Motor neuron (in vitro differentiated cells): ENCODE measurements at regions of chr1 and their contacts with region 1.

Region 1: GRCh38 chr1:27662707-27663393 is 9.1 kb downstream of the IFI6 start:
- ATAC-seq: peak; percentile 14 to 78 (median 64)
- H3K4me3 ChIP-seq: no peak overlapping the region
- H3K27ac ChIP-seq: peak overlapping the region in 1 of 2 donors; percentile 56
- H3K4me1 ChIP-seq: peaks cover 0 to 13% of the 10 kb centered on the region in 2 donors

Region 2: GRCh38 chr1:27300341-27301051 is 362.4 kb before region 1 on chr1:
- in situ Hi-C with region 1: loop called in 2 of 9 experiments (anchors 10 to 25 kb)
- ATAC-seq: peak; percentile 70 to 94 (median 78)
- H3K4me3 ChIP-seq: no peak overlapping the region
- H3K27ac ChIP-seq: peak overlapping the region; percentile 64 to 70
- H3K4me1 ChIP-seq: peaks cover 17 to 30% of the 10 kb centered on the region in 2 donors

Region 3: GRCh38 chr1:27616441-27616840 is 46.4 kb before region 1 on chr1:
- in situ Hi-C with region 1: loop called in 1 of 9 experiments (anchors 10 kb)
- ATAC-seq: no peak
- H3K4me3 ChIP-seq: no peak overlapping the region
- H3K27ac ChIP-seq: no peak overlapping the region
- H3K4me1 ChIP-seq: peaks cover 0 to 6% of the 10 kb centered on the region in 2 donors